ENCODE measurements at regions of chrX and their contacts with region 1.

Region 1: DNA sequence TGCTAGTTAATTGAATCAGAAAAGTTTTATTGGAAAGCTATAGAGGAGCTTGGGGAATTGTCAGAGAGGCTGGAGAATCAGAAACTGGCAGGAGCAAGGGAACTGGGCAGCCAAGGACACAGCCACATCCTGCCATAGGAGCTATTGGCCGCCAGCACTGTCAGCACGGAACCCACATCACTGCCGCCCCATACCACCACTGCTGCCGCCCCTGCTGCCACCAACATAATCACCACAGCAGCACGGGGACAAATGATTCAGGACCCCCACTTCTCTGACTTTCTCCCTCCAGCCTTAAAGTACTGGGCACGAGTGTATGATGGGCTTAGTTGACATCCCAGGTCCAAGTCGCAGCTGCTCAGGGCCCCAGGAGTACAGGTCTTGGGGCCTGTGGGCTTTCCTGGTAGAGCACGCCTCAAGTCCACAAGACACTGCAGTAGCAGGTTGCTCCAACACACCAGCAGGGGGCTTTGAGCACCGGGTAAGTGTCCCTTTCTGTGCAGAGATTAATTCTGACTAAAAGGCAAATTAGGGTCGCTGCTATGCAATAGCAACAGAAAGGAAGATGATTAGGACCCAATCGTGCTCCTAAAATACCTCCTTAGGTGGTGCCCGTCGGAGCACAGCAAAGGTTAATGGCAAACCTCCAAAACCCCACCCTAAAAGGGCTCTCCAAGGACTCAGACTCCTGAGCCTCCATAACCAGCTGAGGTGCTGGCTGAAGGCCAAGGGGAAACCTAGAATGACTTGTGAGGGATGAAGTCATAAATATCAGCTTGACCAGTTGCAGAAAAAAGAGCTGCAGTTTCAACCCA is 6.9 kb downstream of the PJA1 start:
- DNase-seq: no peak
- H3K4me3 ChIP-seq: no peak overlapping the region
- H3K27ac ChIP-seq: no peak overlapping the region
- H3K27me3 ChIP-seq: peaks cover 0 to 78% (median 27%) of the 10 kb centered on the region in 45 donors
- CTCF ChIP-seq: peak in 49 of 56 donors; percentile 15 to 61 (median 42)

Region 2: DNA sequence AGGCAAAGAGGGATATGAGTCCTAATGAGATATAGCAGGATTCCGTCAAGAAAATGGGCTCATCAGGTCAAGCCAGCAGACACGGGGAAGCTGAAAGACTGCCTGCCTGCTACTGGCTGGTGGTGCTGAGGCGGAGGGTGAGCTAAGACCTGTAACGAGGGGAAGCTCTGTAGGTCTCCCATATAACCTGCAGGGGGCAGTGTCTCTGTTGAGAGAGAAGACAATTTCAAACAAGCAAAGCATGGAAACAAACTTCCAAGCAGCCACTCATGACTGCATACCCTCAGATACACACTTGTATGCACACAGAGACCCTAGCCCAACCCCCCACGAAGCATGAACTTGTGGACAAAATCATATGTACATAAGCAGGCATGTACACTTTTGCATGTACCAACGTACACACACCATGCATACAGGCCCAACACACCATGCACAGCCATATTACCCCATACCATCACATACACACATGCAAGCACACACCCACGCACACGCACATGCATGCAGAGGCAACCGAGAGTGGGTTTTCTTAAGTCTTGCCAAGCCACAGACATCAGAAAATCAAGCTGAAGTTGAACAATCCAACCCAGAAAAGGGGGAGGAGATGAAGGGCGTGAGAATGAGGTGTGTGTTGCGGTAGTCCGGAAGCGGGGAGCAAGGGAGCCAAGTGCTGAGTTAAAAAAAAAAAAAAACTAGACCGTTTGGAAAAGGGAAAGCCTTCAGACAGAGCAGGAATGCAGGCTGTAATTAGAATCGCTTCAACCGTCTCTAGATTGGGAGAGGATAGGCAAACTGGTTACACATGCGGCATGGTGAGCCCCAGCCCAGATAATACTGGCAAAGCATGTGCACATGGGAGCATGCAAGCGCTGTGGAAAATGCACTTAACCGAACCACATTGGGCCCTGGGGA is 64.2 kb before region 1 on chrX:
- intact Hi-C with region 1: loop called in 1 of 2 experiments (anchors 10 kb)
- DNase-seq: peak in 5 of 10 donors; percentile 14 to 64 (median 38)
- H3K4me3 ChIP-seq: no peak overlapping the region
- H3K27ac ChIP-seq: no peak overlapping the region
- H3K27me3 ChIP-seq: peaks cover 0 to 52% (median 8%) of the 10 kb centered on the region in 45 donors
- CTCF ChIP-seq: peak in 55 of 56 donors; percentile 22 to 71 (median 58)

Region 3: DNA sequence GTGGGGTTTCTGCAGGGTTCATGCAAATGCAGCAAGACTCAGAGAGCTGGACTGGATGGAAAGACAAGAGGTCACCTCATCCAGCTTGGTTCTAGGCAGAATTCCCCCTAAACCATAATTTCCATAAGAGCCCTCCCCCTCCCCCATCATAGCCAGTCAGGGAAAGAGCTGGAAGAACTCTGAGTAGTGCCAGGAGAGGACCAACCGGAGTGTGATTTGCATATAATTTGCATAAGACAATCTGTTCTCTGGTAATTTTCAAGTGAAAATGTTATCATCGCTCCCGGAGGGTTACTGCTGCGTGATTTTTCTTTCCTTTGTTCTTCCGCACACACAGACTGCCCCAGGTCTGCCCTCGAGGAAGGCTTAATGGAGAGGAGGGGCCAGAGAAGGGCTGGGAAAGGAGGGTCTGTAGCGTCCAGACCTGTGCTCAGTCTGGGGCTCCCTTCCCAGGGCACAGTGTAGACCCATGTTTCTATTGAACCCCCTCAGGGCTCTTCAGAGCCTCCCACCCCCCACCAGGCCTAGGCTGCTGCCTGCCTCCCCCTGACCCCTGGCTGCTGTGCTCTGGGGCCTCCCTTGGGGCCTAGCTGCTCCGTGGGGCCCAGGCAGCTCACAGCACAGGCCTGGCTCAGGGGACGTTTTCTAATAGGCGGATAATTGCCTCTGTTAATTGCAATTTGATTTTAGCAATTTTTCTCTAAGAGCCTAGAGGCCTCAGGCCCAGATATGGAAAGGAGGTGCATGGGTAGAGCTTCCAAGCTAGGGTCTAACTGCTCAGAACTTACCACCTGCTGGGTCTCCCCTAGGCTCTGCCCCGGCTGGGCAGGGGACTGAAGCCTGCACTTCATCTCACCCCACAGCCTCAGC is 97.3 kb after region 1 on chrX:
- intact Hi-C with region 1: no loop called
- DNase-seq: no peak
- H3K4me3 ChIP-seq: no peak overlapping the region
- H3K27ac ChIP-seq: no peak overlapping the region
- H3K27me3 ChIP-seq: peaks cover 0 to 69% (median 15%) of the 10 kb centered on the region in 45 donors
- CTCF ChIP-seq: no peak